ENCODE measurements at regions of chr11 and their contacts with region 1.

Region 1: DNA sequence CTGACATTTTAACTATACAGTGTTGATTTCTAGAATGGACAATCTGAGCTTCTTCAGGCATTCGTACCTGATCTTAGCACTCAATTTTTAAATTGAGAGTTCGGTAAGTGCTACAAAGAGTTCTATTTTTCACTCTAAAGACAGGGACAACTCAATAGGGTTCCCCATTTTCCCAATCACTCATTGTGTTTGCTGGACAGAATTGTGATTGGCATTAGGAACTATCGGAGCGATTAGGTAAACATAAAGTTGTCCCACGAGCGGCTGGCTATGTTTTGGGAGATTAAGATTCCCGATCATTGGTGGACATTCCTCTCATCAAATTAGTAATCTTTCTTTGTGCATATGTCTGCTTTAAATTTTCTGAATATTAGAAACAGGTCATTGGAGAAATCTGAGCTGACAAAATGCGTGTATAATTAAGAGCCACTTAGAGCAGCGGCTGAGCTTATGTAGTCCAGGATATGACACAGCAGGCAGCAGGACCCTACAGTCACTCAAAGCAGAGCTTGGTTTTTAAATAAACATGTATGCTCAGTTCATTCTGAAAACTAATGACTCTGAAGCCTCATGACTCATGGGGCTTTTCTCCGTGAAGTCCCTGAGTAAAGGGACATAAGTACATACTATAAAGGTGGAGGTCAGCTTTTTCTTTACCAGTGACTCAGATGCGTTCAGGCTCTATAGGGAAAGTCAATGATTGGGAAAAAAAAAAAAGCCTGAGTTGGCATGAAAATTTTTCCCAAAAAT is 109.4 kb downstream of the GRIA4 start:
- DNase-seq: peak; percentile 99
- ATAC-seq: peak; percentile 100
- H3K4me3 ChIP-seq: no peak overlapping the region
- H3K27ac ChIP-seq: peak overlapping the region; percentile 80
- H3K4me1 ChIP-seq: peaks cover 16% of the 10 kb centered on the region
- H3K27me3 ChIP-seq: no peaks in the 10 kb centered on the region
- CTCF ChIP-seq: no peak

Region 2: GRCh38 chr11:104678408-104678807 is 1040.8 kb before region 1 on chr11:
- CTCF ChIA-PET with region 1: no interaction called
- POLR2A ChIA-PET with region 1: interaction called, 10 read pairs
- intact Hi-C with region 1: no loop called
- DNase-seq: peak; percentile 32
- ATAC-seq: peak; percentile 84
- H3K4me3 ChIP-seq: no peak overlapping the region
- H3K27ac ChIP-seq: no peak overlapping the region
- H3K4me1 ChIP-seq: no peaks in the 10 kb centered on the region
- H3K27me3 ChIP-seq: no peaks in the 10 kb centered on the region
- CTCF ChIP-seq: no peak

Region 3: GRCh38 chr11:105705786-105706530 is 13.3 kb before region 1 on chr11:
- CTCF ChIA-PET with region 1: no interaction called
- POLR2A ChIA-PET with region 1: no interaction called
- intact Hi-C with region 1: loop called (anchors 1 kb)
- DNase-seq: no peak
- ATAC-seq: no peak
- H3K4me3 ChIP-seq: no peak overlapping the region
- H3K27ac ChIP-seq: no peak overlapping the region
- H3K4me1 ChIP-seq: peaks cover 9% of the 10 kb centered on the region
- H3K27me3 ChIP-seq: no peaks in the 10 kb centered on the region
- CTCF ChIP-seq: no peak

Measured in PC-3 (cell line).